Caco-2 (cell line): ENCODE measurements at regions of chr2 and their contacts with region 1.

Region 1: GRCh38 chr2:110116033-110116710 is 550 bp upstream of the MALL start:
- DNase-seq: peak; percentile 57 to 62
- H3K4me3 ChIP-seq: peak overlapping the region; percentile 81
- H3K4me3 Mint-ChIP-seq: peak overlapping the region; percentile 76
- H3K27ac Mint-ChIP-seq: no peak overlapping the region
- H3K4me1 ChIP-seq: peaks cover 13% of the 10 kb centered on the region
- H3K4me1 Mint-ChIP-seq: no peaks in the 10 kb centered on the region
- H3K27me3 ChIP-seq: no peaks in the 10 kb centered on the region
- H3K27me3 Mint-ChIP-seq: no peaks in the 10 kb centered on the region
- CTCF ChIP-seq: peak; percentile 55 to 68

Region 2: GRCh38 chr2:110105608-110106467 is 10.3 kb before region 1 on chr2:
- CTCF ChIA-PET with region 1: interaction called, 14 read pairs
- POLR2A ChIA-PET with region 1: no interaction called
- intact Hi-C with region 1: loop called (anchors 1 kb)
- DNase-seq: peak; percentile 34 to 50
- H3K4me3 ChIP-seq: no peak overlapping the region
- H3K4me3 Mint-ChIP-seq: no peak overlapping the region
- H3K27ac Mint-ChIP-seq: peak overlapping the region; percentile 68
- H3K4me1 ChIP-seq: peaks cover 57% of the 10 kb centered on the region
- H3K4me1 Mint-ChIP-seq: peaks cover 52% of the 10 kb centered on the region
- H3K27me3 ChIP-seq: no peaks in the 10 kb centered on the region
- H3K27me3 Mint-ChIP-seq: no peaks in the 10 kb centered on the region
- CTCF ChIP-seq: no peak